ENCODE measurements at regions of chr15 and their contacts with region 1.

Region 1: DNA sequence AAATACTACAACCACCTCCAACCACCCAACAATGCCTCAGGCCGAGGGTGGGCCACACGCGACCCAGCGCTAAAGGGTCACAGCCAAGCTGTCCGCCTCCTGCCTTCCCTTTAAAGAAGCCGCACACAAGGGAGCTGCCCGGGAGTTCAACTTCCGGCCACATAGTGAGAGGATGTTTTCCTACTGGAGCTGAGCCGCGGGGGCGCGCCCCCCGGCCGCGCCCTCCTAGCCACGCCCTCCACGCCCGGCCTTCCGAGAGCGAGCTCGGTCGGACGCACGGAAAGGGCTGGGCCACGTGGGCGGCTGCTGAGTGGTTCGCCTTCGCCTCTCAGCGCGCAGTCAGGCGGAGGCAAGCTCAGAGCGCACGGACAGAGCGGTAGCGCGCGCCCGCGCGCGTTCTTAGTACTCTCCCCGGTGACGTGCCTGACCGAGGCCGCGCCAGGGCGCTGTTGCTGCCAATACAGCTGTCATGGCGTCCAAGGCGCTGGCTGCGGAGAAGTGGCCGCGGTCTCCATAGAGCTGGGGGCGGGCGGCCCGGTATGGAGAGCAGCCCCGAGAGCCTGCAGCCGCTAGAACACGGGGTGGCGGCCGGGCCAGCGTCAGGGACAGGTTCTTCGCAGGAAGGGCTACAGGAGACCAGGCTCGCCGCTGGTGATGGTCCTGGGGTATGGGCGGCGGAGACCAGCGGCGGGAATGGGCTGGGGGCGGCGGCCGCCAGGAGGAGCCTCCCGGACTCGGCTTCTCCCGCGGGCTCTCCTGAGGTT is at the start of gene MINDY2:
- DNase-seq: peak; percentile 97
- H3K4me3 ChIP-seq: peak within 1 kb of the TSS; percentile 99
- H3K4me3 Mint-ChIP-seq: no peak within 1 kb of the TSS
- H3K27ac Mint-ChIP-seq: peak within 1 kb of the TSS; percentile 85
- H3K4me1 ChIP-seq: peaks cover 10% of the 10 kb centered on the region
- H3K4me1 Mint-ChIP-seq: no peaks in the 10 kb centered on the region
- H3K27me3 ChIP-seq: no peaks in the 10 kb centered on the region
- H3K27me3 Mint-ChIP-seq: no peaks in the 10 kb centered on the region
- CTCF ChIP-seq: peak; percentile 35 to 42
- total RNA-seq, gene MINDY2: 24.0 and 25.5 TPM in 2 replicates

Region 2: GRCh38 chr15:58227706-58228543 is 543.1 kb before region 1 on chr15:
- CTCF ChIA-PET with region 1: interaction called, 4 read pairs
- POLR2A ChIA-PET with region 1: no interaction called
- intact Hi-C with region 1: loop called (anchors 5 kb)
- DNase-seq: peak; percentile 61 to 79
- H3K4me3 ChIP-seq: no peak overlapping the region
- H3K4me3 Mint-ChIP-seq: no peak overlapping the region
- H3K27ac Mint-ChIP-seq: no peak overlapping the region
- H3K4me1 ChIP-seq: peaks cover 5% of the 10 kb centered on the region; the same call in 1 of the 2 replicates
- H3K4me1 Mint-ChIP-seq: peaks cover 10% of the 10 kb centered on the region
- H3K27me3 ChIP-seq: no peaks in the 10 kb centered on the region
- H3K27me3 Mint-ChIP-seq: no peaks in the 10 kb centered on the region
- CTCF ChIP-seq: peak; percentile 81 to 85

Region 3: DNA sequence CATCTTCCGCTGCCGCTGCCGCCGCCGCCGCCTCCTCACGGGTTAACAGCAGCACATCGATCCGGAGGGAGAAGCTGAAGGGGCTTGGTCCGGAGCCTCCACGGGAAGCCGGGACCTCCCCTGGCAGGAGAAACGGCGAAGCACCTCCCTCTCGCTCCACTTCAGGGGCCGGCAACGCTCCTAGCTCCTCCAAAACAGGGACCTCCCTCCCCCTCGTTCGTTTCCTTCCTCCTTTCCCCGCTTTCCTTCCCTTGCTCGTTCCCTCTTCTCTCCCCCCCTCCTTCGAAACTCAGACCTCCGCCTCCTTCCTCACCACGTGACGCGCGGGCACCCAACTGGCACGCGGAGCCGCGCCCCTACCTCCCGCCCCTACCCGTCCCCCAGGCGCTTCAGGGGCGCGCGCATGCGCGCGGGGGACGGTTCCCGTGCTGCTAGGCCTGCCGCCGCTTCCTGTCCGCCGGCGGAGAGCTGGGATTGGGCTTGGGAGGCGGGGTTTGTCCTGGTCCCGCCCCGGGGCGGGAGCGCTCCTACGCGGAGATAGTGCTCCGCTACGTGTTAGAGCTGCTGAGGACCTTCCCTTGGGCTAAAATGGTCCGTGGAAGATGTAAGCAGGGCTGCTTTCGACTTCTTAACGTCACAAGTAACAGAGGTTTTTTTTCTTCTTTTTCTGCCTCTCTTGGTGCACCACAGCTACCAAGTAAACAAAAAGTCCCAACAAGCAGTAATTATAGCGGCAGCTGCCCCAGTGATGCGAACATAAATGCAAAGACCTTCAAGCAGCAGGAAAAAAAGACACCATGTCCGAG is 21.3 kb before region 1 on chr15 and contains the start of gene ADAM10:
- CTCF ChIA-PET with region 1: interaction called, 42 read pairs
- POLR2A ChIA-PET with region 1: interaction called, 99 read pairs
- intact Hi-C with region 1: loop called (anchors 1 kb)
- DNase-seq: peak; percentile 99
- H3K4me3 ChIP-seq: peak within 1 kb of the TSS; percentile 98
- H3K4me3 Mint-ChIP-seq: peak within 1 kb of the TSS; percentile 87
- H3K27ac Mint-ChIP-seq: peak within 1 kb of the TSS; percentile 89
- H3K4me1 ChIP-seq: peaks cover 25% of the 10 kb centered on the region
- H3K4me1 Mint-ChIP-seq: peaks cover 8% of the 10 kb centered on the region
- H3K27me3 ChIP-seq: no peaks in the 10 kb centered on the region
- H3K27me3 Mint-ChIP-seq: no peaks in the 10 kb centered on the region
- CTCF ChIP-seq: no peak
- total RNA-seq, gene ADAM10: 168 and 170 TPM in 2 replicates

Region 4: DNA sequence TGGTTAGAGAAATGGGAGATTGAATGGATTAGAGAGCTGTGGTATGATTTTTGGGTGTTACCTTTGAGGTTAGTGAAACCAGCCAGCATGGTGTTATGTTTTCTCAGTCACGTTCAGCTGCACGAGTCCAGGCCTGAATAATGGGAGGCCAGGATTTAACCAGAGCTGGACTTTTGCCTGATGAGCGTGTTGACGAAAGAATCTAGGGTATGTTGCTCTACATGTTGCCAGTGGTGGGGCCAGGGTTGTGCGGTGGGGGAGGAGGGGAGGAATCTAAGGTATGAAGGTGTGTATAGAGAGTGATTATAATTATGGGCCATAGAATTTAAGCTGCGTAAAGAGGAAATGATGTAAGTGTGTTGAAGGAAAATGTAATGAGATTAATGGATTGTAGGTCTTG is 22.8 kb after region 1 on chr15:
- CTCF ChIA-PET with region 1: interaction called, 26 read pairs
- POLR2A ChIA-PET with region 1: interaction called, 74 read pairs
- intact Hi-C with region 1: loop called (anchors 1 kb)
- DNase-seq: peak; percentile 91 to 97
- H3K4me3 ChIP-seq: no peak overlapping the region
- H3K4me3 Mint-ChIP-seq: peak overlapping the region; percentile 61
- H3K27ac Mint-ChIP-seq: peak overlapping the region; percentile 99
- H3K4me1 ChIP-seq: peaks cover 31% of the 10 kb centered on the region
- H3K4me1 Mint-ChIP-seq: peaks cover 41% of the 10 kb centered on the region
- H3K27me3 ChIP-seq: no peaks in the 10 kb centered on the region
- H3K27me3 Mint-ChIP-seq: no peaks in the 10 kb centered on the region
- CTCF ChIP-seq: no peak

Region 5: GRCh38 chr15:58830556-58830955 is 59.5 kb after region 1 on chr15:
- CTCF ChIA-PET with region 1: interaction called, 3 read pairs
- POLR2A ChIA-PET with region 1: no interaction called
- intact Hi-C with region 1: loop called (anchors 2 kb)
- DNase-seq: no peak
- H3K4me3 ChIP-seq: no peak overlapping the region
- H3K4me3 Mint-ChIP-seq: no peak overlapping the region
- H3K27ac Mint-ChIP-seq: no peak overlapping the region
- H3K4me1 ChIP-seq: peaks cover 11% of the 10 kb centered on the region
- H3K4me1 Mint-ChIP-seq: peaks cover 16% of the 10 kb centered on the region
- H3K27me3 ChIP-seq: no peaks in the 10 kb centered on the region
- H3K27me3 Mint-ChIP-seq: no peaks in the 10 kb centered on the region
- CTCF ChIP-seq: no peak

Region 6: GRCh38 chr15:58933281-58934113 is 162.5 kb after region 1 on chr15 and contains the start of gene SLTM:
- CTCF ChIA-PET with region 1: no interaction called
- POLR2A ChIA-PET with region 1: no interaction called
- intact Hi-C with region 1: loop called (anchors 5 kb)
- DNase-seq: peak; percentile 95
- H3K4me3 ChIP-seq: peak within 1 kb of the TSS; percentile 77
- H3K4me3 Mint-ChIP-seq: peak within 1 kb of the TSS; percentile 91
- H3K27ac Mint-ChIP-seq: peak within 1 kb of the TSS; percentile 98
- H3K4me1 ChIP-seq: peaks cover 12% of the 10 kb centered on the region
- H3K4me1 Mint-ChIP-seq: no peaks in the 10 kb centered on the region
- H3K27me3 ChIP-seq: no peaks in the 10 kb centered on the region
- H3K27me3 Mint-ChIP-seq: no peaks in the 10 kb centered on the region
- CTCF ChIP-seq: peak; percentile 10 to 39
- total RNA-seq, gene SLTM: 79.5 and 94.0 TPM in 2 replicates